Head of caudate nucleus (tissue), 42 donors: ENCODE measurements at regions of chr7 and their contacts with region 1.

Region 1: DNA sequence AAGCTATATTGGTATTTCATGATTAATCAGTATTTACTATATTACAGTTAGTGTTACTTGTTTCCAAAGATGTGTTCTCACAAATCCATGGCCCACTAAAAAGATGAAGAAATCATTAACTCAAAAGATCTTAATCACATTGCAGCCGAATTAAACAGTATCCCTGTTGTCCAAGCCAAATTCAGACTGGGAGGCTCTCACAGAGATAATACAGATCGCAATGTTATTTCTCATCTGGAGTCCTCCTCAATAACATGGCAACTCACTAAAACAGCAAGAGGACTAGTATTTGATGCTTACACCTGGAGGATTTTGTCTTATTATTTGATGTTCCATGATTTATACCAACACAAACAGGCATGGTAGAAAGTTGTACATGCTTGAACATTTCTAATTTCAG is 23.4 kb downstream of the CYP51A1 start:
- DNase-seq: no peak

Region 2: GRCh38 chr7:91995391-91996105 is 115.3 kb before region 1 on chr7:
- intact Hi-C with region 1: no loop called
- DNase-seq: no peak

Region 3: DNA sequence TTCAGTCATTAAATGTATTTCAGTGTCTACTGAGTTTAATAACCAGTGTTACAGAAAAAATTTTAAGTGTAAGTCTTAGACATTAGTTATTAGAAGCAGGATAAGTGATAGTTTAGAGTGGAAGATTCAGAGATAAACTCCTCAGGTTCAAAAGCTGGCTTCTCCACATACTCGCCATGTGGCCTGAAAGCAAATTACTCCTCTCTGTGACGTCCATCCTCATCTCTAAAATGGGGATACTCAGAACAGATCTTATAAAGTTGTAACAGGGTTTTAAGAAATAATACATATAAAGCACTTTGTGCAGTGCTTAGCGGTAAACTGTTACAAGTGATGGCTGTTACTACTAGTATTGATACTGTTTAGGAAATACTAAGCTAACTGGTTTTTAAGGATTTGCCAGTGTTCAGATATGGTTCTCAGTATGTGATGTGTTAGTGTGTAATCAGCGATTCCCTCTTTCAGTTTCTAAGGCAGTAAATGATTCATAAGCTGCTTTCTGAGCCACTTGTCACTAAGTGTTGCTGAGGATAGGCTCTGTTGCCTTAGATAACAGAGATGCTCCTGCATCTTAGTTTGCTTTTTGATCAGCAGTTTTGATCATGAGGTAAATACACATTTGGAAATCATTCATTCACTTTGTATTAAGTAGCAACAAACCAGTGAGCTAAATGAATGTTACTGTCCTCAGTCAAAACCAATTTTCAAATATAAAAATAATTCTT is 35.3 kb before region 1 on chr7:
- intact Hi-C with region 1: loop called (anchors 5 kb)
- DNase-seq: no peak